MCF 10A (cell line): ENCODE measurements at regions of chr6 and their contacts with region 1.

Region 1: DNA sequence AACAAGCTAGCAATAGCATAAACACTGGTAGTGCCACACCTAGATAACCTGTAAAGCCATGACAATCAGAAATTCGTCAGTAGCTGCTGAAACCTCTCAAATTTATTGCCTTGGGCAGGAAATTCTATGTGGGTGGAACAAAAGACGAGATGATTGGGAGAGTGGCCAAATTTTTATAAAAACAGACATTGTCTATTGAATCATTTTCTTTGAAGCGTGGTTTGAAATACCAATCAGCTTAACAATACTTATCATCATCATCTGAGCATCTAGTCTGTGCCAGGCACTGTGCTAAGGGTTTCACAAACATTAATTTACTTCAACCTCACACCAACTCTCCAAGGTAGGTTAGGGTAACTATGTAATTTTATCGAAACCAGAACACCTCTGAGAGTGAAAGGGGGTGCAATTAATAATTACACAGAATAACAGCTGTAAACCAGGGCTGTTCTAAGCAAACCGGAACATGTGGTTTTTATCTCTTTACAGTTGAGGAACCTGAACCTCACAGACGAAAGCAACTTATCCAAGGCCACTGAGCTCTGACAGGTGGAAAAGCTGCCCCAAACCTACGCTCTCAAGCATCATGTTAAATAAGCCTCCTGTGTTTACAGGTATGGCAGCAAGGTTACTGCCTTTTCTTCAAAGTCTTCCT is 43.4 kb downstream of the NHSL1 start:
- DNase-seq: peak; percentile 94
- H3K4me3 Mint-ChIP-seq: peak overlapping the region; percentile 68
- H3K27ac Mint-ChIP-seq: peak overlapping the region; percentile 82
- H3K4me1 Mint-ChIP-seq: peaks cover 10% of the 10 kb centered on the region
- H3K27me3 Mint-ChIP-seq: no peaks in the 10 kb centered on the region
- CTCF ChIP-seq: no peak

Region 2: GRCh38 chr6:138403801-138404661 is 51.8 kb before region 1 on chr6 and contains the start of gene HEBP2:
- CTCF ChIA-PET with region 1: no interaction called
- POLR2A ChIA-PET with region 1: interaction called, 10 read pairs
- intact Hi-C with region 1: no loop called
- DNase-seq: peak; percentile 96
- H3K4me3 Mint-ChIP-seq: peak within 1 kb of the TSS; percentile 80
- H3K27ac Mint-ChIP-seq: peak within 1 kb of the TSS; percentile 77
- H3K4me1 Mint-ChIP-seq: peaks cover 11% of the 10 kb centered on the region
- H3K27me3 Mint-ChIP-seq: no peaks in the 10 kb centered on the region
- CTCF ChIP-seq: peak; percentile 12
- total RNA-seq, gene HEBP2: 71.2 and 89.7 TPM in 2 replicates

Region 3: GRCh38 chr6:138410972-138411667 is 44.8 kb before region 1 on chr6:
- CTCF ChIA-PET with region 1: no interaction called
- POLR2A ChIA-PET with region 1: interaction called, 8 read pairs
- intact Hi-C with region 1: loop called (anchors 1 kb)
- DNase-seq: peak; percentile 89
- H3K4me3 Mint-ChIP-seq: peak overlapping the region; percentile 7
- H3K27ac Mint-ChIP-seq: peak overlapping the region; percentile 29
- H3K4me1 Mint-ChIP-seq: peaks cover 37% of the 10 kb centered on the region
- H3K27me3 Mint-ChIP-seq: no peaks in the 10 kb centered on the region
- CTCF ChIP-seq: no peak

Region 4: DNA sequence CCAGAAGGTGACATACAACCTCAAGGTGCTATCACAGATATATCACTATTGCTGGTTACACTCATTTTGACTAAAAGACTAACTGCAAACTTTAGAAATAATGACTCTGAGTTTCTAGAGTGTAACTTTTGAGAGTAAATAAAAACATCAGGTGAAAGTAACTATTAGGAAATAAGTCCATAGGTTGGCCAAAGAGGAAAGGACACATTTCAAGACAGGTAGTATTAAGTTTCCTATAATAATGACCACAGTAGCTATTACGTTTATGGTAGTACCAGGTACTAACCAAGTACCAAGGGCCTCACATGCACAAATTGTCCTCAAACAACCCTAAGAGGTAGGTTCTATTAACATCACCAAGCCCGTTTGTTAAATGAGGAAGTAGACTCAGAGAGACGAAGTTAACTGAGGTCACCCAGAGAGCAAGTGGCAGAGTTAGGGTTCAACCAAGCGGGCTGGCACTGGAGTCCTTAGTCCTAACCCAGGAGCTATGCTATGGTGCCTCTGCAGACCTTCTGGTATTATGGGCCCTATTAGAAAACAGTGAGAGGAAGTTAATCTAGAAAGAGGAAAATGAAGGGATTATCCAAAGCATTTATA is 15.0 kb before region 1 on chr6:
- CTCF ChIA-PET with region 1: interaction called, 4 read pairs
- POLR2A ChIA-PET with region 1: interaction called, 18 read pairs
- intact Hi-C with region 1: no loop called
- DNase-seq: no peak
- H3K4me3 Mint-ChIP-seq: no peak overlapping the region
- H3K27ac Mint-ChIP-seq: no peak overlapping the region
- H3K4me1 Mint-ChIP-seq: peaks cover 7% of the 10 kb centered on the region
- H3K27me3 Mint-ChIP-seq: no peaks in the 10 kb centered on the region
- CTCF ChIP-seq: no peak

Region 5: GRCh38 chr6:138493413-138493812 is 37.5 kb after region 1 on chr6:
- CTCF ChIA-PET with region 1: interaction called, 7 read pairs
- POLR2A ChIA-PET with region 1: interaction called, 66 read pairs
- intact Hi-C with region 1: no loop called
- DNase-seq: peak; percentile 79
- H3K4me3 Mint-ChIP-seq: peak overlapping the region; percentile 67
- H3K27ac Mint-ChIP-seq: peak overlapping the region; percentile 98
- H3K4me1 Mint-ChIP-seq: peaks cover 12% of the 10 kb centered on the region
- H3K27me3 Mint-ChIP-seq: no peaks in the 10 kb centered on the region
- CTCF ChIP-seq: no peak